SK-N-SH (cell line): ENCODE measurements at regions of chr2 and their contacts with region 1.

Region 1: DNA sequence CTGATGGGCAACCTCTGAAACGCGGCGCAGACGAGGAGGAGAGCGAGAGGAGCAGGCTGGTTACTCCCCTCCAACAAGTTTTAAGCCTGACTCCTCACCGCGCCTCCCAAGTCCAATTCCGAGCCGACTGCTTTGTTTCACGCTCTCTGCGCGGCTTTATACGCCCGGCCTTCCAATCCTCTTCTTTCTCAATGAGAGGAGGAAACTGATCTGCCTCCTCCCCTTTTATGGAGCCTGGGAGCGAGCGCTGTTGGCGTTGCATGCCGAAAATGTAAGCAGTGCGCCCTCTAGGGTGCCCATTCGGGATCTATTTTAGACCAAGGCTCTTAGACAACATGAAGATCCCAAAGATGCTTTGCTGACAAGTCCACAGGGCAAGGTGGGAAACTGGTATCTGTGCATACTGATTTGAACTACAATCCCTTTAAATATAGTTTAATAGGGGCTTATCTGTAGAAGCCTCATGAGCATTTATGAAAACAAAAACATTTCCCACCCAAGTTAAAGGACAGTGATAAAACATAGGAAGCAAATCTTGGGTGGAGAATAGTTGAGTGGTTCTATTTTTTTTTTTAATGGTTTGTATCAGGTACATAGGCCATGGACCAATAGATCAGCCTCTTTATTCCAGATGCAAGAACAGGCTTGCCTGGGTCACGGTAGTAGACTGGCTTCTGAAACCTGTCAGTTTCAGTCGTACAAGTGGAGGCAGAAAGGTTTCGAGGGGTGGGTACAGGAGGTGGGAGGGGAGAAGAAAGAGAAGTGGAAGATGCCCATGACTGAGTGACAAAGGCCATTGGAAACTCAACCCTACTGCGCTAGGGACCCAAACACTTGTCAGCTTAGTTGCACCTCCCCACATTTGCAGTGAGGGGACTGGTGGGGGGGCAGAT is at the start of gene RND3:
- DNase-seq: peak; percentile 86
- H3K4me3 ChIP-seq: peak within 1 kb of the TSS; percentile 90 to 98
- H3K27ac ChIP-seq: peak within 1 kb of the TSS; percentile 90 to 92
- H3K4me1 ChIP-seq: peaks cover 17 to 27% of the 10 kb centered on the region in 2 experiments; a peak in 3 of 4 replicates
- H3K27me3 ChIP-seq: no peaks in the 10 kb centered on the region
- CTCF ChIP-seq: peak; percentile 92
- EP300 ChIP-seq: peak in 1 of 2 experiments; percentile 49; a peak in 2 of 4 replicates
- RAD21 ChIP-seq: peak; percentile 90
- polyA plus RNA-seq, gene RND3: 49.7 and 56.7 TPM in 2 replicates

Region 2: GRCh38 chr2:149559341-149560068 is 928.3 kb before region 1 on chr2:
- CTCF ChIA-PET with region 1: no interaction called
- POLR2A ChIA-PET with region 1: no interaction called
- DNase-seq: no peak
- H3K4me3 ChIP-seq: no peak overlapping the region
- H3K27ac ChIP-seq: no peak overlapping the region
- H3K4me1 ChIP-seq: no peaks in the 10 kb centered on the region; a peak in 1 of 4 replicates
- H3K27me3 ChIP-seq: no peaks in the 10 kb centered on the region
- CTCF ChIP-seq: no peak
- EP300 ChIP-seq: no peak
- RAD21 ChIP-seq: no peak

Region 3: DNA sequence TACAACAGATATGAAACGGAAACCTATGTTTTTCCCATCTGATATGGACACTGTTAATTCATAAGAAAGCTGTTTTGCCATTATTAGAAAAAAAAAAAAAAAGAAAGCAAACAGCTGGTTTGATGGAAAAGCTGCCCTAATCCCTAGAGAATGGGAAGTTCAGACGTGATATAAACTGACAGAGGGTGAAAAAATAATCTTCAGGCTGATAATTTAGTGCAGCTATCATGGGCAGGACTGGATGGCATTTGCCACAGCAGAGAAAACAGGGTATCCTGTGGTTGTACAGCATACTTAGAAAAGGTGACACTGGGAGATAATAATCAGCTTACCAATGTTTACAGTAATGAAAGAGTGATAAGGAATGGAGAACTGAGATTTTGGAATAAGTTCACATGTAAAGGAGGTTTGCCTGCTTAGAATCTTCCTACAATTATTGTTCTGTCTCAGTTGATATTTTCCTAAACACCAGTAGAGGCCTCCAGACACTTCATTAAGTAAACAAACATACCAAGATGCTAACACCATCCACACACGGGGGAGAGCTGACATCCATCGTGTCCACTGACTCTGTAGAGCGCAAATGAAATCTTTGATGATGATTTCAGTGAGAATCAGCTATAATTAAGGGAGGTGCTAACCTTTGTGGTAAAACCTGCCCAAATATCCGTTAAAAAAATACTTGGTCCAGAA is 688.6 kb before region 1 on chr2:
- CTCF ChIA-PET with region 1: interaction called, 10 read pairs
- POLR2A ChIA-PET with region 1: no interaction called
- DNase-seq: peak; percentile 23
- H3K4me3 ChIP-seq: no peak overlapping the region
- H3K27ac ChIP-seq: no peak overlapping the region
- H3K4me1 ChIP-seq: peaks cover 0 to 6% of the 10 kb centered on the region in 2 experiments; a peak in 2 of 4 replicates
- H3K27me3 ChIP-seq: no peaks in the 10 kb centered on the region
- CTCF ChIP-seq: no peak
- EP300 ChIP-seq: no peak
- RAD21 ChIP-seq: peak; percentile 83